OCI-LY7 (cell line): ENCODE measurements at regions of chr6 and their contacts with region 1.

Region 1: GRCh38 chr6:12637960-12638641 is 78.5 kb upstream of the PHACTR1 start:
- DNase-seq: peak; percentile 27
- H3K4me3 ChIP-seq: no peak overlapping the region
- H3K27ac ChIP-seq: no peak overlapping the region
- H3K4me1 ChIP-seq: no peaks in the 10 kb centered on the region
- CTCF ChIP-seq: peak; percentile 80

Region 2: GRCh38 chr6:12890171-12890790 is 252.2 kb after region 1 on chr6:
- CTCF ChIA-PET with region 1: no interaction called
- POLR2A ChIA-PET with region 1: no interaction called
- intact Hi-C with region 1: loop called (anchors 1 kb)
- DNase-seq: peak; percentile 29
- H3K4me3 ChIP-seq: no peak overlapping the region
- H3K27ac ChIP-seq: no peak overlapping the region
- H3K4me1 ChIP-seq: no peaks in the 10 kb centered on the region
- CTCF ChIP-seq: peak; percentile 79